ENCODE measurements at regions of chr5 and their contacts with region 1.

Region 1: DNA sequence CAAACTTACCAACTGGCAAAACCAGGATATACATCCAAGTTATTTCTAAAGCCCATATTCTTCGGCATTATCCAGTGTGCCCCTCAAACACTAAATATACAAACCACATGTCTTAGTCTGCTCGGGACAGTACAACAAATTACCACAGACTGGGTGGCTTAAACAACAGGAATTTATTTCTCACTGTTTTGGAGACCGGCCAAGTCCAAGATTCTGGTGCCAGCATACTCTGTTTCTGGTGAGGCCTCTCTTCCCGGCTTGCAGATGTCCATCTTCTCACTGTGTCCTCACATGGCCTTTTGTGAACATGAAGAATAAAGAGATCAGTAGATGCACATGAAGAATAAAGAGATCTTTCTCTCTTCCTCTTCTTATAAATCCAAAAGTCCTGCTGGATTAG is 12.9 kb upstream of the SLCO6A1 start:
- DNase-seq: no peak
- H3K4me3 Mint-ChIP-seq: no peak overlapping the region
- H3K27ac Mint-ChIP-seq: no peak overlapping the region
- H3K4me1 Mint-ChIP-seq: no peaks in the 10 kb centered on the region
- H3K27me3 Mint-ChIP-seq: no peaks in the 10 kb centered on the region
- CTCF ChIP-seq: no peak

Region 2: GRCh38 chr5:102421647-102422046 is 90.0 kb before region 1 on chr5:
- CTCF ChIA-PET with region 1: interaction called, 3 read pairs
- intact Hi-C with region 1: loop called (anchors 5 kb)
- DNase-seq: peak; percentile 68
- H3K4me3 Mint-ChIP-seq: no peak overlapping the region
- H3K27ac Mint-ChIP-seq: no peak overlapping the region
- H3K4me1 Mint-ChIP-seq: no peaks in the 10 kb centered on the region
- H3K27me3 Mint-ChIP-seq: no peaks in the 10 kb centered on the region
- CTCF ChIP-seq: no peak

Region 3: DNA sequence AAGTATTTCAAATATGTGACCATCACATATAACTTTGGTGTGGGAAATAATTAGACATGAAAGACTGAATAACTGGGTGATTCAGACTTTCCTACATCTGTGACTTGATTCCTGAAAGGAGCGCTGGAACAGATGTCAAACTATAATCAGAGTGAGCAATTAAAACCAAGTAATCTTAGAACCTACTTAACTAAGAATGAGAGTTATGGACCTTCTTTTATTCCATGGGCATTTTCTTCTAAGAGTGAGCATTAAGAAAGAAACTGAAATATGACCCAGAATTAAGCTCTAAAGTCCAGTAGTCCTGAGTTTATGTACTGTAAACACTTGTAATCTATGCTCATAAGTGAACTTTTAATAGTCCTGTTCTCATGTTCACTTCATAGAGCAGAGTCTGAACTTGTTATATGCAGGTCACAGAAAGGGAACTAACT is 311.8 kb after region 1 on chr5:
- CTCF ChIA-PET with region 1: no interaction called
- intact Hi-C with region 1: no loop called
- DNase-seq: no peak
- H3K4me3 Mint-ChIP-seq: no peak overlapping the region
- H3K27ac Mint-ChIP-seq: no peak overlapping the region
- H3K4me1 Mint-ChIP-seq: no peaks in the 10 kb centered on the region
- H3K27me3 Mint-ChIP-seq: no peaks in the 10 kb centered on the region
- CTCF ChIP-seq: no peak